ENCODE measurements at regions of chr15 and their contacts with region 1.

Region 1: DNA sequence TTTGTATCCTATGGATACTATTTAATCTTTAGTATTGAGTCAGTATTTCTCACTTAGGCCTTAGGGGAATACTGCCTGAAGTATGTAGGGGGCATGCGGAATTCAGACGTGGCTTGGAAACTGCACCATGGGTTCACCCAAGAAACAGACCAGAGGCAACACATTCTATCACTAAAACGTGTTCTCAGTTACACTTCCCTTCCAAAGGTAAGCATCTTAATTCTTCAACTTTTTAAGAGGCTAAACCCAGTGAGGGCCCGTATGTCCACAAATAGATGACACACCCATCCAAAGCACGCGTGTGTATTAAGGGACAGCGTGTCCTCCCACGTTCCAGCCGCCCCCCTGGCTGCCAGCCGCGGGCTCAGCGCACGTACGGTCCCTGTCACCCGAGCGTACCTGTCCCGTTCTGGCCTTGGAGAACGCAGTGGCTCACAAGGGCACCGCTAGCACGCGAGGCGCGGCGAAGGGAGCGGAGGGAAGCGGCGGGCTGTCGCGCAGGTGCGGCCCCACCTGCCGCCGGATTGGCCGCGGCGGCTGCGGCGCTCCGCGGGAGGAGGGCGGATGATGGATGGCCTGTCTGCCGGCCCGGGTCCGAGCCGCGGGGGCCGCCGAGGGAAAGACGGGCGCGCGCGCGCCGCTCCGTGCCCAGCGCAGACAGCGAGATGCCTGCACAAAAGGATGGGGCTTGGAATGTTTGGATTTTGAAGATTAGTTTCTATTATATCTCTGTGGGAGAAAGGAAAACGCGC is 1003.9 kb upstream of the NR2F2 start:
- DNase-seq: peak; percentile 75
- H3K4me3 ChIP-seq: peak overlapping the region; percentile 64 to 81 (median 65)
- H3K27ac ChIP-seq: peak overlapping the region; percentile 98
- H3K4me1 ChIP-seq: peaks cover 63% of the 10 kb centered on the region
- H3K27me3 ChIP-seq: no peaks in the 10 kb centered on the region
- CTCF ChIP-seq: peak in 1 of 2 donors; percentile 0
- POLR2A ChIP-seq: no peak

Region 2: GRCh38 chr15:94736236-94736635 is 590.4 kb before region 1 on chr15:
- CTCF ChIA-PET with region 1: no interaction called
- POLR2A ChIA-PET with region 1: no interaction called
- dilution Hi-C with region 1: no loop called
- intact Hi-C with region 1: no loop called
- DNase-seq: peak; percentile 11
- H3K4me3 ChIP-seq: no peak overlapping the region
- H3K27ac ChIP-seq: no peak overlapping the region
- H3K4me1 ChIP-seq: no peaks in the 10 kb centered on the region
- H3K27me3 ChIP-seq: no peaks in the 10 kb centered on the region
- CTCF ChIP-seq: no peak
- POLR2A ChIP-seq: no peak

Region 3: GRCh38 chr15:95175914-95176658 is 150.5 kb before region 1 on chr15:
- CTCF ChIA-PET with region 1: no interaction called
- POLR2A ChIA-PET with region 1: no interaction called
- dilution Hi-C with region 1: no loop called
- intact Hi-C with region 1: loop called (anchors 1 kb)
- DNase-seq: peak; percentile 94
- H3K4me3 ChIP-seq: no peak overlapping the region
- H3K27ac ChIP-seq: peak overlapping the region; percentile 95
- H3K4me1 ChIP-seq: peaks cover 30% of the 10 kb centered on the region
- H3K27me3 ChIP-seq: no peaks in the 10 kb centered on the region
- CTCF ChIP-seq: no peak
- POLR2A ChIP-seq: no peak

Region 4: GRCh38 chr15:95459273-95459672 is 132.7 kb after region 1 on chr15:
- CTCF ChIA-PET with region 1: no interaction called
- POLR2A ChIA-PET with region 1: no interaction called
- dilution Hi-C with region 1: no loop called
- intact Hi-C with region 1: loop called (anchors 1 kb)
- DNase-seq: peak; percentile 90
- H3K4me3 ChIP-seq: peak overlapping the region in 1 of 3 experiments; percentile 51
- H3K27ac ChIP-seq: peak overlapping the region; percentile 85
- H3K4me1 ChIP-seq: peaks cover 41% of the 10 kb centered on the region
- H3K27me3 ChIP-seq: no peaks in the 10 kb centered on the region
- CTCF ChIP-seq: no peak
- POLR2A ChIP-seq: peak; percentile 65

Region 5: DNA sequence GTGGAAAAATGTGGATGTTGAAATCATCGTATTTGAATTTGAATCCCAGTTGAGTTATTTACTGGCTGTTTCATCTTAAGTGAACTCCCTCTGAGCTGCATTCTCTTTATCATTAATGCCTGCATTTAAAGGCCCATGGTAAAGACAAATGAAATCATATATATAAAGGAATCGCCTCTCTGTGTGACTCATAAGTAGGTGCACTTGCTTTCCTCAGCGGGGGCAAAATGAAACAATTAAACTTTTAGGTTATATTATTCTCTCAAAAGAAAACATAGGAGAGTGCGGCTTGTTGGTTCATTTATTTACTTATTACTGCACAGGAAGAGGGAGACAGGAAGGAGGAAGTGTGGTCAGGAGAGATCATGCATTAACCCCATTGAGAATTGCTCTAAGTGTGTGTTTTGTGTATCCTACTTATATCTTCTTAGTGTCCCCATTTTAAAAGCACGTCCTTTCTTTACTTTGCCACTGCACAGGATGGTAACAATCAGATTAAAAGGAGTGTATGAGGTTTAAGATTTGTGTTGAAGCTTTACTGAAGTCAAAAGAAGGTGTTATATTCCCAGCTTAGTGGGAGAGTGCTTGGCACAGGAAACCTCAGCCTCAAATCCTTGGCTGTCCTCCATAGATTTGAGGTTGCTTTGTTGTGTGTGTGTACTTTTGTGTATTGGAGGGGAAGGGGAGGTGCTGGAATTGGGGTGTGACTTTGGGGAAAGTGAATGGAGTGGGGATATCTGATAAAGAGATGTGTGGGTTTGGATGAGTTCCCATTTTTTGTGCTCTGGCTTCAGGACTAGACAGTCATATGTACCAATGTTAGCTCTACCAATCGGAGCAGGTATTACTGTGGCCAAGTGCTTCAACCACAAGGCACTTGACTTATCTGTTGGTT is 408.1 kb after region 1 on chr15:
- CTCF ChIA-PET with region 1: no interaction called
- POLR2A ChIA-PET with region 1: no interaction called
- dilution Hi-C with region 1: no loop called
- intact Hi-C with region 1: loop called (anchors 1 kb)
- DNase-seq: peak; percentile 96
- H3K4me3 ChIP-seq: no peak overlapping the region
- H3K27ac ChIP-seq: peak overlapping the region; percentile 70
- H3K4me1 ChIP-seq: peaks cover 28% of the 10 kb centered on the region
- H3K27me3 ChIP-seq: no peaks in the 10 kb centered on the region
- CTCF ChIP-seq: no peak
- POLR2A ChIP-seq: peak; percentile 50